ENCODE measurements at regions of chr16 and their contacts with region 1.

Region 1: GRCh38 chr16:30407102-30407803 is at the start of gene ZNF771:
- DNase-seq: peak; percentile 93
- ATAC-seq: peak; percentile 83
- H3K4me3 Mint-ChIP-seq: peak within 1 kb of the TSS; percentile 98
- H3K27ac Mint-ChIP-seq: peak within 1 kb of the TSS; percentile 92
- H3K4me1 Mint-ChIP-seq: peaks cover 18% of the 10 kb centered on the region
- H3K27me3 Mint-ChIP-seq: peaks cover 2% of the 10 kb centered on the region
- total RNA-seq, gene ZNF771: 4.8 to 5.6 TPM

Region 2: DNA sequence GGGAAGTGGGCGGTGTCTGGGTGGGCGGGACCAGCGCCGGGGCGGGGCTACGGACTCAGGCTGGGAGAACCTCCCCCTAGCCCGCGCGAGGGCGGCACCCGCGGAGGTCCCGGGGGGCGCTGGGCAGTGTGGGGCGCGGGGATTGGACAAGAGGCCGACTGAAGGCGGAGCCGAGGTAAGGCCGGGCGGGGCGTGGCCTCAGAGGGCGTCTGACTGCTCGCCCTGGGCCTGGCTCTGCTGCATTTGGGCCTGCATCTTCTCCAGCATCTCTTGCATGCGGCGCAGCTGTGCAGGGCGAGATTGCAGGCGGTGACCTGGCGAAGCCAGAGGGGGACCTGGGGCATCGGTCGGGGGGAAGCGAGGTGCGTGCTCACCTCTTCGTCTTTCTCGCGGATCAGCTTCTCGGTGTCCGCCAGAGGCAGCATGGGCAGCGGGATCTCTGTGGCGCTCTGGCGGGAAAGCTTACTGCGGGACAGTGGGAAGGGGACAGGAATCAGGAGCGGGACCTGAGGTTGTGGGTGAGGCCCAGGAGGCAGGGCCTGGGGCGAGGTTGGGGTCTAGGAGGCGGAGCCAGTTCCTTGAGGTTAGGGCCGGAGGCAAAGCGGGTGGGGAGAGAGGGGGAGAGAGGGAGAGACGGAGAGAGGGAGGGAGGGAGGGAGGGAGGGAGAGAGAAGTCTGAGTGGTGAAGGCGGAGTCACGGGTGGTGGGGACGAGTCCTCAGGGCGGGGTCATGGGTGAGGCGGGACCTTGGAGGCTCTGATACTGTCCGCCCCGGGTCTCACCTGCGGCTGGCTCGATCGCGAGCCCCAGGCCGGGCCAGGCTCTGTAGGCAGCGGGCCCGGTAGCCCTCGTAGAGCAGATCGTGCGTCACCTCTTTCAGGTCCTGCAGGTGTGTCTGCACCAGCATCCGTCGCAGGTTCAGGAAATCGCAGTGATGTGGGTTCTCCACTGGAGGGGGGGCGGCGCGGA is 28.7 kb before region 1 on chr16:
- POLR2A ChIA-PET with region 1: interaction called, 19 read pairs
- DNase-seq: peak; percentile 99
- ATAC-seq: peak; percentile 80
- H3K4me3 Mint-ChIP-seq: peak overlapping the region; percentile 93
- H3K27ac Mint-ChIP-seq: peak overlapping the region; percentile 98
- H3K4me1 Mint-ChIP-seq: peaks cover 34% of the 10 kb centered on the region
- H3K27me3 Mint-ChIP-seq: no peaks in the 10 kb centered on the region

Region 3: GRCh38 chr16:30417529-30418349 is 10.5 kb after region 1 on chr16:
- POLR2A ChIA-PET with region 1: interaction called, 11 read pairs
- DNase-seq: peak; percentile 91
- ATAC-seq: peak; percentile 90
- H3K4me3 Mint-ChIP-seq: peak overlapping the region; percentile 42
- H3K27ac Mint-ChIP-seq: no peak overlapping the region
- H3K4me1 Mint-ChIP-seq: peaks cover 21% of the 10 kb centered on the region
- H3K27me3 Mint-ChIP-seq: no peaks in the 10 kb centered on the region

Region 4: DNA sequence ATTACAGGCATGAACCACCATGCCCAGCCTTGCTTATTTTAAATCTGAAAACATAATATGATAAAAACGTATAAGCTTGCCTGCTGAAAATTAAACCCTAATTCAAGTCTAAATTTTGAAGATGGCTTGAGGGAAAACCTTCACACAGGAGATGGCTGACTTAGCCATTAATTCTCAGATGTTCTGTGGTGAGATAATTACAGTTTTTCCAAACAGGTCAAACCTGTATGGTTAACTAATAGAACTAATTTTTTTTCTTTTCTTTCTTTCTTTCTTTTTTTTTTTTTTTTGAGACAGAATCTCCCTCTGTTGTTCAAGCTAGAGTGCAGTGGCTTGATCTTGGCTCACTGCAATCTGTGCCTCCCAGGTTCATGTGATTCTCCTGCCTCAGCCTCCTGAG is 59.5 kb after region 1 on chr16:
- POLR2A ChIA-PET with region 1: no interaction called
- DNase-seq: no peak
- ATAC-seq: no peak
- H3K4me3 Mint-ChIP-seq: no peak overlapping the region
- H3K27ac Mint-ChIP-seq: peak overlapping the region; percentile 73
- H3K4me1 Mint-ChIP-seq: peaks cover 46% of the 10 kb centered on the region
- H3K27me3 Mint-ChIP-seq: no peaks in the 10 kb centered on the region

Region 5: GRCh38 chr16:30491744-30492308 is 84.6 kb after region 1 on chr16:
- POLR2A ChIA-PET with region 1: no interaction called
- DNase-seq: no peak
- ATAC-seq: peak; percentile 89
- H3K4me3 Mint-ChIP-seq: peak overlapping the region; percentile 43
- H3K27ac Mint-ChIP-seq: peak overlapping the region; percentile 91
- H3K4me1 Mint-ChIP-seq: peaks cover 34% of the 10 kb centered on the region
- H3K27me3 Mint-ChIP-seq: no peaks in the 10 kb centered on the region